ENCODE measurements at regions of chr1 and their contacts with region 1.

Region 1: GRCh38 chr1:117067533-117068370 is 7.6 kb downstream of the TTF2 start:
- DNase-seq: peak; percentile 27 to 72 (median 61)
- H3K4me3 ChIP-seq: no peak overlapping the region
- H3K27ac ChIP-seq: no peak overlapping the region
- H3K4me1 ChIP-seq: peaks cover 0 to 4% (median 2%) of the 10 kb centered on the region in 4 experiments
- H3K27me3 ChIP-seq: no peaks in the 10 kb centered on the region

Region 2: GRCh38 chr1:117093870-117094621 is 26.3 kb after region 1 on chr1:
- CTCF ChIA-PET with region 1: interaction called, 11 read pairs
- POLR2A ChIA-PET with region 1: interaction called, 3 read pairs
- DNase-seq: peak; percentile 32 to 78 (median 71)
- H3K4me3 ChIP-seq: no peak overlapping the region
- H3K27ac ChIP-seq: peak overlapping the region in 1 of 2 experiments; percentile 47
- H3K4me1 ChIP-seq: no peaks in the 10 kb centered on the region
- H3K27me3 ChIP-seq: no peaks in the 10 kb centered on the region

Region 3: DNA sequence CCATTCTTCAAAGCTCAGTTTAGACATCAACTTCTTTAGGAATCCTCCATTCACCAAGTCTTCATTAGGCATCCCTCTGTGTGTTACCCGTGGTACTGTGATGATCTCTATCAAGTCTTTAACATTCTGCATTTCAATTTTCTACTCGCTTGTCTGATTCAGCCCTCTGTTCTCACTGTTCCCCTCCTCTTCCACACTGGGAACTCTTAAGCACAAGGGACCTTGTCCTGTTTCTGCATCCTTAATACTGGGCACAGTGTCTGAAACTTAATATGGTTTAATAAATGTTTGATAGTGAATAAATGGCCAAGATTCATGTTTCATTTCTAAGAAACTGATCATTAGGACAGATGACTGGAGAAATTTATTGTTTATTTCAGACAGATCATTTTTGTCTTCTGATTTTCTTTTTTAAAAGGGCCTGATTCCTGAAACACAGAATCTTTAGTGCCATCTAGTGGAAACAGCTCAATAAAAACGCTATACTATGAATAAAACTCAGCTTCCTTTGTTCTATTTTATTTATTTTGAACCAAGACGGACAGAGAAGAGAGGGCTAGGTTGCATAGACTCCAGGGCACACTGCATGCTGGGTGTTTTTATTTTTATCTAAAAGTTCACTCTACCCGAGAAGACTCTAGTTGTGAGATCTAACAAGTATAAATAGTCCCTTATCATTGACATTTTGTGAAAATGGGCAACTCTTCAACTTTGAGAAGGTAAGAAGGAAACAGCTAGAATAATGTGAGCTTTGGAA is 60.7 kb after region 1 on chr1:
- CTCF ChIA-PET with region 1: interaction called, 37 read pairs
- POLR2A ChIA-PET with region 1: no interaction called
- DNase-seq: peak; percentile 31 to 66 (median 63)
- H3K4me3 ChIP-seq: no peak overlapping the region
- H3K27ac ChIP-seq: no peak overlapping the region
- H3K4me1 ChIP-seq: no peaks in the 10 kb centered on the region
- H3K27me3 ChIP-seq: peaks cover 0 to 4% (median 2%) of the 10 kb centered on the region in 5 experiments

Region 4: DNA sequence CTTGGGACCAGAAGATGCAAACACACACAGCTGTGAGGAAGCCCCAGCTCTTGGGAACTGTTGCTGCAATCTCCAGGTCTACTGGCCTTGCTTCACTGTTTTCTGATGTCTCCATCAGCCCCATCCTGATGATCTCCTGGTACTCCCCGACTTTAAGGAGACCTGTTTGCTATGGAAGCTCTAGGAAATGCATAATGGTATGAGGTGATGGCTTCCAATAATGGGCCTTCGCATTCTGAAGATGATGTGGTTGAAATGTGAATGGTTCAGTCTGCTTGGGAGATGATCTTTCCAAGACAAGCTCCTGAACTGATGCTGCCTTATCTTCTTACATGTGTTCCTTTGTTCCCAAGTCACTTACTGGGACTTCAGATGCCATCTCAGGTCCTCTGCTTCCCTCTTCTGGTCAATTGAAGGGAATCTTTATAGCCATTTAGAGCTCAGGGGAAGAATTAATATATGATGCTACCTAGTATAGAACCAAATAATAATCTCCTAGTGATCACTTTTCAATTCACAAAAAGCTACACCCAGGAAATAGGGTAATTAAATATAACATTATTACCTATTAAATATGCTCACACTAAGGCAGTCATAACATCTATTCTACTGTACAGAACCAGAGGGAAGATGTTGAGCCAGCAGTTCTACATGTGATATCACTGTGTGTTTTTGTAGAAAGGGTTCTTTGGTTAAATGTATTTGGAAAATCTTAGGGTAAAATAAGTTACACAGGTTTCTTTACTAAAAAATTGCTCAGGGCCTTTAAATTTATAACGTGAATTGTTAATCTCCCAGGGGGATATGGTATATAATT is 216.9 kb after region 1 on chr1:
- CTCF ChIA-PET with region 1: interaction called, 11 read pairs
- POLR2A ChIA-PET with region 1: no interaction called
- DNase-seq: peak; percentile 29 to 56 (median 51)
- H3K4me3 ChIP-seq: no peak overlapping the region
- H3K27ac ChIP-seq: no peak overlapping the region
- H3K4me1 ChIP-seq: no peaks in the 10 kb centered on the region
- H3K27me3 ChIP-seq: no peaks in the 10 kb centered on the region

Measured in common myeloid progenitor, CD34-positive (primary cell).